Heart right ventricle (tissue), 16 donors: ENCODE measurements at regions of chr16 and their contacts with region 1.

Region 1: GRCh38 chr16:56708525-56709442 is 21.1 kb upstream of the NUP93 start:
- DNase-seq: no peak
- ATAC-seq: no peak
- H3K4me3 ChIP-seq: no peak overlapping the region
- H3K27ac ChIP-seq: peak overlapping the region in 1 of 10 donors; percentile 64
- H3K4me1 ChIP-seq: no peaks in the 10 kb centered on the region
- H3K27me3 ChIP-seq: no peaks in the 10 kb centered on the region
- CTCF ChIP-seq: no peak

Region 2: GRCh38 chr16:56519459-56520250 is 189.1 kb before region 1 on chr16 and contains the start of gene BBS2:
- intact Hi-C with region 1: loop called in 8 of 10 experiments (anchors 2 to 10 kb)
- DNase-seq: peak; percentile 90 to 94
- ATAC-seq: peak; percentile 96 to 99 (median 98)
- H3K4me3 ChIP-seq: peak within 1 kb of the TSS; percentile 71 to 99 (median 92)
- H3K27ac ChIP-seq: peak within 1 kb of the TSS; percentile 35 to 94 (median 90)
- H3K4me1 ChIP-seq: peaks cover 0 to 56% (median 38%) of the 10 kb centered on the region in 9 donors
- H3K27me3 ChIP-seq: no peaks in the 10 kb centered on the region
- CTCF ChIP-seq: peak in 1 of 9 donors; percentile 14
- total RNA-seq, gene BBS2: 37.7 to 75.9 (median 60.1) TPM

Region 3: GRCh38 chr16:56532714-56533113 is 176.1 kb before region 1 on chr16:
- intact Hi-C with region 1: no loop called
- DNase-seq: no peak
- ATAC-seq: no peak
- H3K4me3 ChIP-seq: no peak overlapping the region
- H3K27ac ChIP-seq: no peak overlapping the region
- H3K4me1 ChIP-seq: no peaks in the 10 kb centered on the region
- H3K27me3 ChIP-seq: peaks cover 0 to 36% (median 18%) of the 10 kb centered on the region in 7 donors
- CTCF ChIP-seq: no peak

Region 4: DNA sequence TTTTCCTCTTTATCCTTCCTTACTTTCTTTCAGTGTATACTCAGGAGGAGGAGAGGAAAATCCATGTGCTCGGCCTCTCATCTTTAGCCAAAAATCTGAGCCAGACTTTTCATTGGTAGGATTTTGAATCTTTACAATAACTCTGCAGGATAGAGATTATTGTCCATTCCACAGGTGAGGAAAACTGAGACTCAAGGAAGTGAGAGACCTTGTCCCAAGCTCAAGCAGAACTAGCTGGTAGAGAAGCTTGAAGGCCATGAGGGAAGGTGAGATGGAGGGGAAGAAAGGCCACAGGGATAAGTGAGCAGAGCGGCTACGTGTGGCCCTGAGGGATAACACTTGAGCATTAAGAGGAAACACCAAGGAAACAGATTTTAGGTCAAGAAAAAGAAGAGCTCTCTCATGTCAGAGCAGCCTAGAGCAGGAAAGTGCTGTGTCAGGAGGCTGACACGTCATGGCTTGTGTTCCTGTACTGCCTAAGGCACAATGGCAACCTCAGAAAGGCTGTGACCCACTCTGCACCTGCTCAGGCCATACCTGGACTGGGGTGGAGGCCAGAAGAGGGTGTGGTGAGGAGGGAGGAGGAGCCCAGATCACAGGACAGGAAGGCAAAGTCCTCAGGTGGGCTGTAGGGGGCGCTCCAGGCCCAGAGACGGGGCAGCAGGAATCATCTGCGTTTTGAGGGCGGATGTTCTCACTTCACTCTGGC is 132.0 kb before region 1 on chr16:
- intact Hi-C with region 1: loop called in 8 of 10 experiments (anchors 2 to 10 kb)
- DNase-seq: peak; percentile 59 to 78
- ATAC-seq: peak; percentile 43 to 92 (median 88)
- H3K4me3 ChIP-seq: no peak overlapping the region
- H3K27ac ChIP-seq: no peak overlapping the region
- H3K4me1 ChIP-seq: no peaks in the 10 kb centered on the region
- H3K27me3 ChIP-seq: peaks cover 0 to 2% (median 0%) of the 10 kb centered on the region in 7 donors
- CTCF ChIP-seq: peak; percentile 38 to 86 (median 71)